ENCODE measurements at regions of chr20 and their contacts with region 1.

Region 1: GRCh38 chr20:41095110-41095969 is 42.0 kb upstream of the PLCG1 start:
- DNase-seq: peak; percentile 64
- H3K4me3 Mint-ChIP-seq: no peak overlapping the region
- H3K27ac Mint-ChIP-seq: no peak overlapping the region
- H3K4me1 Mint-ChIP-seq: no peaks in the 10 kb centered on the region
- H3K27me3 Mint-ChIP-seq: no peaks in the 10 kb centered on the region

Region 2: DNA sequence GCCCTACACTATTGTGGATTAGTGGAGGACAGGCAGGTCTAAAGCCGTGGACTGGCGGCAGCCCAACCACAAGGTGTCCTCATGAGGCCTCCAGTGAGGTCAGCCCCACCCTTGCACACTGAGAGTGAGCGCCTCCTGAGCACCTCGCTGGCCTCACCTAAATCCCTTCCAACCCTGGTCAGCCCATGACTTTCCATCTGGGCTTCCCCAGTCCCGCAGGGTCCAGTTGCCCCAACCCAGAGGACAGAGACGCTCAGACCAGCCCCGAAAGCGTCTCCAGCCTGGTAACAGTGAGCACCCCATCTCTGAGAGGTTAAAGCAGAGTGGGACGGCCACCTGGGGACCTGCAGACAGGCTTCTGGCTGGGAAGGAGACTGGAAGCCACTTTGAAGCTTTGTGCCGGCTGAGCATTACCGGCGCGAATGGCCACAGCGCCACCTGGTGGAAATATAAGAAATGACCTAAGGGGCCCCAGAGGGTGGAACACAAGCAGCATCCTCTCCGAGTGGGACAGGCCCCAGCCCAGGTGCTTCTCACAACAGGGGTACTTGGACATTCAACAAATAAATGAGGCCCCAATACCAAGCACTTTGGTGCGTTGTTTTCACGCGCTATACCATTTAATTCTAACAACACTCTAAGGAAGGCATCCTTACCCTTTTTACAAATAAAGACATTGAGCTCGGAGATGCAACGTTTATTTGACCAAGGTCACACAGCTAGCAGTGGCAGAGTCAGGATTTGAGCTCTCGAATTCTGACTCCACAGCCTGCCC is 132.4 kb before region 1 on chr20:
- CTCF ChIA-PET with region 1: interaction called, 40 read pairs
- DNase-seq: peak; percentile 79
- H3K4me3 Mint-ChIP-seq: no peak overlapping the region
- H3K27ac Mint-ChIP-seq: no peak overlapping the region
- H3K4me1 Mint-ChIP-seq: peaks cover 11% of the 10 kb centered on the region
- H3K27me3 Mint-ChIP-seq: peaks cover 10% of the 10 kb centered on the region

Region 3: DNA sequence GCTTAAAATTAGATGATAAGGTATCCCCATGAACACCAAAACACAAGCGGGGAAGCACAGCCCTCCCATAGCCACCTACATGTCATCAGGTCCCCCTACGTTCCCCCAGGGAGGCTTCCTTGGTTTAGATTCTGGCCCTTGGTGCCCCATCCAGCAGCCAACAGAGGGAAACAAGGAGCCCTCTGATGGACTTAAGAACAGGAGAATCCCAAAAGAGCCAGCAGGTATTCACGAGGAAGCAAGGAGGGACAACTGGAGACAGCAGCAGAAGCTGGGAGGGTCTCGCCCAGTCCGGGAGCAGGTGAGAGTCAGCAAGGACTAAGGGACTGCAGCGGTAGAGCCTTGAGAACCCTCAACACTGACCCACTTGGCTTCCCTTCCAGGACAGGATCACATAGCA is 125.1 kb before region 1 on chr20:
- CTCF ChIA-PET with region 1: interaction called, 40 read pairs
- DNase-seq: no peak
- H3K4me3 Mint-ChIP-seq: no peak overlapping the region
- H3K27ac Mint-ChIP-seq: no peak overlapping the region
- H3K4me1 Mint-ChIP-seq: peaks cover 11% of the 10 kb centered on the region
- H3K27me3 Mint-ChIP-seq: peaks cover 52% of the 10 kb centered on the region

Region 4: GRCh38 chr20:40982415-40983145 is 112.8 kb before region 1 on chr20:
- CTCF ChIA-PET with region 1: interaction called, 234 read pairs
- DNase-seq: no peak
- H3K4me3 Mint-ChIP-seq: no peak overlapping the region
- H3K27ac Mint-ChIP-seq: no peak overlapping the region
- H3K4me1 Mint-ChIP-seq: peaks cover 16% of the 10 kb centered on the region
- H3K27me3 Mint-ChIP-seq: peaks cover 31% of the 10 kb centered on the region

Region 5: GRCh38 chr20:41028348-41029148 is 66.8 kb before region 1 on chr20 and contains the start of gene TOP1:
- CTCF ChIA-PET with region 1: interaction called, 10 read pairs
- DNase-seq: peak; percentile 100
- H3K4me3 Mint-ChIP-seq: peak within 1 kb of the TSS; percentile 82
- H3K27ac Mint-ChIP-seq: peak within 1 kb of the TSS; percentile 96
- H3K4me1 Mint-ChIP-seq: peaks cover 48% of the 10 kb centered on the region
- H3K27me3 Mint-ChIP-seq: peaks cover 6% of the 10 kb centered on the region

Region 6: DNA sequence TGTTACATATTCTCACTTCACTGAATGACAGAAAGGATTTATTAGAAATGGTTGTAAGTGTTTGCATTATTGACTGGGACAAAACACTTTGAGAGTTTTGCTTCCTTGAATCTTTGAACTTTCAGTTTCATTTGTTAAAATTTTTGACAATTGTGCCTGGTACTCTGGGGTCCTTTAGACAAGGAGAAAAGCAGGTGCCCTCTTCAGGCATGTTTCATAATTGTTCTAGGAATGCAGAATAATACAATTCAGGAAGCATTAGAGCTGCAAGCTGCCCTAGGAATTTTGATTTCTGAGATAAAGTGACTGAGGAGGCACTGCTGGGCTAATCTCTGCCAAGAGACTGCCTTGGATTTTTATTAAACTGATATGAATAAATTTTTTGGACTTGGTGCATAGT is 17.0 kb before region 1 on chr20:
- CTCF ChIA-PET with region 1: interaction called, 12 read pairs
- DNase-seq: no peak
- H3K4me3 Mint-ChIP-seq: no peak overlapping the region
- H3K27ac Mint-ChIP-seq: peak overlapping the region; percentile 77
- H3K4me1 Mint-ChIP-seq: peaks cover 55% of the 10 kb centered on the region
- H3K27me3 Mint-ChIP-seq: no peaks in the 10 kb centered on the region